Posterior cingulate gyrus (tissue), 11 donors: ENCODE measurements at regions of chr11 and their contacts with region 1.

Region 1: GRCh38 chr11:83193315-83194280 is at the start of gene ANKRD42:
- DNase-seq: peak; percentile 85 to 99 (median 93)

Region 2: GRCh38 chr11:83205608-83206185 is 12.1 kb after region 1 on chr11:
- intact Hi-C with region 1: no loop called
- DNase-seq: no peak

Region 3: GRCh38 chr11:83285771-83286528 is 92.4 kb after region 1 on chr11 and contains the start of gene CCDC90B:
- intact Hi-C with region 1: loop called (anchors 2 kb)
- DNase-seq: peak; percentile 95 to 99 (median 98)

Region 4: GRCh38 chr11:83612891-83613766 is 419.5 kb after region 1 on chr11:
- intact Hi-C with region 1: no loop called
- DNase-seq: no peak